T-cell (primary cell): ENCODE measurements at regions of chr3 and their contacts with region 1.

Region 1: DNA sequence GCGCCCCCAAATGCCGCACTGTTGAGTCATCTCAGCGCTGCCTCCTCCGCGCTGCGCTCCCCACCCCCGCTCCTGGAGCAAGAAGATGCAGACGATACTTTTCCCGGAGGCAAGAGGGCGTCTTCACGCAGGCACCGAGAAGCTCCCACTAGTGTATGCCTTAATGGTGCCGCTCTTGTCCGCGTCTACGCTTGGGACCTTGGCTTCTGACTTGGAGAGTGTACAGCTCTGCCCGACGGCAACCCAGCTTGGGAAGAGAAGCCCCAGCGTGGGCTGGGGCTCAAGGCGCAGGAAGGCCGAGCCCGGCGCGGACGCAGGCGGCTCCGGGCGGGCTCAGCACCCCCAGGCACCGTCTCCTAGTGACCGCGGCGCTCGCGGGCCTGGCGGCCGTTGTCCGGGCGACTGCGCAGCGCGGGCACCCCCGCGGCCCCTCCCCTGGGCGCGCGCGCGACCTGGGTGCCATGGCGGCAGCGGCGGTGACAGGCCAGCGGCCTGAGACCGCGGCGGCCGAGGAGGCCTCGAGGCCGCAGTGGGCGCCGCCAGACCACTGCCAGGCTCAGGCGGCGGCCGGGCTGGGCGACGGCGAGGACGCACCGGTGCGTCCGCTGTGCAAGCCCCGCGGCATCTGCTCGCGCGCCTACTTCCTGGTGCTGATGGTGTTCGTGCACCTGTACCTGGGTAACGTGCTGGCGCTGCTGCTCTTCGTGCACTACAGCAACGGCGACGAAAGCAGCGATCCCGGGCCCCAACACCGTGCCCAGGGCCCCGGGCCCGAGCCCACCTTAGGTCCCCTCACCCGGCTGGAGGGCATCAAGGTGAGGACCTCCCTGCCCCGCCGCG is at the start of gene P4HTM:
- DNase-seq: peak; percentile 26 to 84 (median 51)
- ATAC-seq: peak; percentile 61 to 76 (median 74)
- H3K4me3 ChIP-seq: peak within 1 kb of the TSS; percentile 88 to 94
- H3K4me3 Mint-ChIP-seq: peak within 1 kb of the TSS; percentile 89 to 95 (median 93)
- H3K27ac ChIP-seq: peak within 1 kb of the TSS; percentile 67
- H3K27ac Mint-ChIP-seq: peak within 1 kb of the TSS; percentile 92 to 93
- H3K4me1 ChIP-seq: peaks cover 8 to 39% of the 10 kb centered on the region in 2 experiments
- H3K4me1 Mint-ChIP-seq: peaks cover 46 to 51% (median 47%) of the 10 kb centered on the region in 3 donors
- H3K27me3 ChIP-seq: no peaks in the 10 kb centered on the region
- H3K27me3 Mint-ChIP-seq: no peaks in the 10 kb centered on the region
- total RNA-seq, gene P4HTM: 40.4 to 79.0 (median 73.6) TPM

Region 2: GRCh38 chr3:49007068-49007770 is 17.2 kb after region 1 on chr3 and contains the start of gene WDR6:
- CTCF ChIA-PET with region 1: interaction called, 9 to 64 read pairs
- POLR2A ChIA-PET with region 1: interaction called, 5 to 7 read pairs
- DNase-seq: peak; percentile 89 to 99 (median 96)
- ATAC-seq: peak; percentile 90 to 92 (median 91)
- H3K4me3 ChIP-seq: peak within 1 kb of the TSS; percentile 72 to 96
- H3K4me3 Mint-ChIP-seq: peak within 1 kb of the TSS; percentile 93 to 100 (median 99)
- H3K27ac ChIP-seq: peak within 1 kb of the TSS; percentile 95
- H3K27ac Mint-ChIP-seq: peak within 1 kb of the TSS; percentile 100
- H3K4me1 ChIP-seq: peaks cover 0 to 27% of the 10 kb centered on the region in 2 experiments
- H3K4me1 Mint-ChIP-seq: peaks cover 29 to 40% (median 35%) of the 10 kb centered on the region in 3 donors
- H3K27me3 ChIP-seq: no peaks in the 10 kb centered on the region
- H3K27me3 Mint-ChIP-seq: no peaks in the 10 kb centered on the region
- total RNA-seq, gene WDR6: 204 to 300 (median 293) TPM

Region 3: GRCh38 chr3:49013755-49014628 is 24.0 kb after region 1 on chr3:
- CTCF ChIA-PET with region 1: interaction called, 5 to 11 read pairs
- POLR2A ChIA-PET with region 1: interaction called, 3 to 6 read pairs
- DNase-seq: peak in 17 of 35 experiments; percentile 19 to 60 (median 37)
- ATAC-seq: peak; percentile 26 to 36 (median 31)
- H3K4me3 ChIP-seq: no peak overlapping the region
- H3K4me3 Mint-ChIP-seq: no peak overlapping the region
- H3K27ac ChIP-seq: no peak overlapping the region
- H3K27ac Mint-ChIP-seq: no peak overlapping the region
- H3K4me1 ChIP-seq: peaks cover 4 to 25% of the 10 kb centered on the region in 2 experiments
- H3K4me1 Mint-ChIP-seq: peaks cover 23 to 37% (median 28%) of the 10 kb centered on the region in 3 donors
- H3K27me3 ChIP-seq: no peaks in the 10 kb centered on the region
- H3K27me3 Mint-ChIP-seq: no peaks in the 10 kb centered on the region

Region 4: GRCh38 chr3:49021813-49022687 is 32.0 kb after region 1 on chr3 and contains the start of gene NDUFAF3:
- CTCF ChIA-PET with region 1: interaction called in 1 of 2 experiments, 21 read pairs
- POLR2A ChIA-PET with region 1: interaction called in 1 of 2 experiments, 11 read pairs
- DNase-seq: peak; percentile 74 to 95 (median 87)
- ATAC-seq: peak; percentile 76 to 83 (median 82)
- H3K4me3 ChIP-seq: peak within 1 kb of the TSS; percentile 85 to 90
- H3K4me3 Mint-ChIP-seq: peak within 1 kb of the TSS; percentile 90 to 93 (median 91)
- H3K27ac ChIP-seq: peak within 1 kb of the TSS; percentile 75
- H3K27ac Mint-ChIP-seq: peak within 1 kb of the TSS; percentile 96 to 98
- H3K4me1 ChIP-seq: peaks cover 20 to 53% of the 10 kb centered on the region in 2 experiments
- H3K4me1 Mint-ChIP-seq: peaks cover 55 to 64% (median 58%) of the 10 kb centered on the region in 3 donors
- H3K27me3 ChIP-seq: no peaks in the 10 kb centered on the region
- H3K27me3 Mint-ChIP-seq: no peaks in the 10 kb centered on the region
- total RNA-seq, gene NDUFAF3: 62.8 to 92.1 (median 78.1) TPM

Region 5: GRCh38 chr3:49028673-49029562 is 38.9 kb after region 1 on chr3 and contains the start of gene IMPDH2:
- CTCF ChIA-PET with region 1: interaction called, 4 to 23 read pairs
- POLR2A ChIA-PET with region 1: interaction called, 5 to 9 read pairs
- DNase-seq: peak; percentile 82 to 98 (median 90)
- ATAC-seq: peak; percentile 94 to 98 (median 96)
- H3K4me3 ChIP-seq: peak within 1 kb of the TSS; percentile 79 to 81
- H3K4me3 Mint-ChIP-seq: peak within 1 kb of the TSS; percentile 84 to 91 (median 89)
- H3K27ac ChIP-seq: peak within 1 kb of the TSS; percentile 91
- H3K27ac Mint-ChIP-seq: peak within 1 kb of the TSS; percentile 91 to 93
- H3K4me1 ChIP-seq: peaks cover 7 to 20% of the 10 kb centered on the region in 2 experiments
- H3K4me1 Mint-ChIP-seq: peaks cover 35 to 44% (median 43%) of the 10 kb centered on the region in 3 donors
- H3K27me3 ChIP-seq: no peaks in the 10 kb centered on the region
- H3K27me3 Mint-ChIP-seq: no peaks in the 10 kb centered on the region
- total RNA-seq, gene IMPDH2: 110 to 160 (median 149) TPM

Region 6: GRCh38 chr3:49093853-49094767 is 104.1 kb after region 1 on chr3 and contains the start of gene QRICH1:
- CTCF ChIA-PET with region 1: interaction called in 1 of 2 experiments, 28 read pairs
- POLR2A ChIA-PET with region 1: no interaction called
- DNase-seq: peak; percentile 91 to 97 (median 95)
- ATAC-seq: peak; percentile 81 to 87 (median 86)
- H3K4me3 ChIP-seq: peak within 1 kb of the TSS; percentile 78 to 99
- H3K4me3 Mint-ChIP-seq: peak within 1 kb of the TSS; percentile 90 to 98 (median 94)
- H3K27ac ChIP-seq: peak within 1 kb of the TSS; percentile 96
- H3K27ac Mint-ChIP-seq: peak within 1 kb of the TSS; percentile 98 to 99
- H3K4me1 ChIP-seq: peaks cover 14 to 37% of the 10 kb centered on the region in 2 experiments
- H3K4me1 Mint-ChIP-seq: peaks cover 40 to 49% (median 44%) of the 10 kb centered on the region in 3 donors
- H3K27me3 ChIP-seq: no peaks in the 10 kb centered on the region
- H3K27me3 Mint-ChIP-seq: no peaks in the 10 kb centered on the region
- total RNA-seq, gene QRICH1: 142 to 202 (median 155) TPM

Region 7: DNA sequence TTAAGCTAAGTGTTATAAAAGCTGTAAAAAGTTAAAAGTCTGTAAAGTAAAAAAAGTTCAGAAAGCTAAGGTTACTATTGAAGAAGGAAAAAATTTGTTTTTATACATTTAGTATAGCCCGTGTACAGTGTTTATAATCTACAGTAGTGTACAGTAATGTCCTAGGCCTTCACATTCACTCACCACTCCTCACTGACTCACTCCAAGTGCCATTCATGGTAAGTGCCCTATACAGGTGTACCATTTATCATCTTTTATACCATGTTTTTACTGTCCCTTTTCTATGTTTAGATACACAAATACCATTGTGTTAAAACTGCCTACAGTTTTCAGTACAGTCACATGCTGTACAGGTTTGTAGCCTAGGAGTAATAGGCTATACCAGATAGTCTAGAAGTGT is 167.3 kb after region 1 on chr3:
- CTCF ChIA-PET with region 1: interaction called, 3 to 10 read pairs
- POLR2A ChIA-PET with region 1: interaction called in 1 of 2 experiments, 4 read pairs
- DNase-seq: no peak
- ATAC-seq: no peak
- H3K4me3 ChIP-seq: no peak overlapping the region
- H3K4me3 Mint-ChIP-seq: no peak overlapping the region
- H3K27ac ChIP-seq: no peak overlapping the region
- H3K27ac Mint-ChIP-seq: no peak overlapping the region
- H3K4me1 ChIP-seq: peaks cover 0 to 6% of the 10 kb centered on the region in 2 experiments
- H3K4me1 Mint-ChIP-seq: peaks cover 0 to 8% (median 6%) of the 10 kb centered on the region in 3 donors
- H3K27me3 ChIP-seq: no peaks in the 10 kb centered on the region
- H3K27me3 Mint-ChIP-seq: no peaks in the 10 kb centered on the region